Activated T-helper 1 cell treated with anti-CD3 and anti-CD28 coated beads, Interleukin-12 subunit alpha, Interleukin-12 subunit beta, Interleukin-2, Interleukin-4 antibody, amounts not matched to agents 30 ng/mL and 10 ng/mL and 1 ng/mL, durations not matched to agents 14 hours and 24 hours and 36 hours (primary cell): ENCODE measurements at regions of chr12 and their contacts with region 1.

Region 1: DNA sequence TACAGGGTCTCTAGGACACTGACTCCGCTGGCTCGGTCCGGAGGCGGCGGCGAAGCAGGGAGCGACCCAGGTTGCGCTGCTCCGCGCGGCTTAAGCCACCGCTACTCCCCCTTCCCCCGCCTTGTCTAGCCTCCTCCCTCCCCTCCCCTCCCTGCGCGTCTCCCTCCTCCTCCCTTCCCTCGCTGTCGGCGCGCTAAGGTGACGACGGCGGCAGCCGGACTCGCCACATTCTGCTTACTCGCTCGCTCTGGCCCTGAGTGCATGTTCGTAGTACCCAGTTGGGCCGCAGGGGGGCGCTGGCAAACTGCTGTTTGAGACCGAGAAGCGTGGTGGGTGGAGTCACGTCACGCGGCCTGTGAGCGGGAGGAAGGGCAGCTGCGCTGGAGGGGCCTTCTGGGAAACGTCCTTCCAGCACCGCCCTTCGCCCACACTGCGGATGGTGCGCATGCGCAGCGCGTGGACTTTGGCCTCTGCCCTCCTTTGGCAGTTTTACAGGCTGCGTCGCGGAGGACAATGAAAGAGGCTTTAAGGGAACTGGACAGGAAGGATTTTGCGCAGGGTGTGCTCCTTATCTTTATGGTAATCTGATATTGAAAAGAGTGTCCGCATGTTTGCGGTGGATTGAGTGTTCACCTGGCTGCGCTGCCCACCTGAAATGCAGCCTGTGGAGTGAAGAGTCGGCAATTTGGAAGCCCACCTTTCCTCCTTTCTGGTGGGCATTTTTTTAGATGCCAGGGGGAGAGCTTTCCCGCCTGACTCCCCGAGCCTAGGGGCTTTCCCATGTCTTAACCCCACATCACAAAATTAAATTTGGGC is at the start of gene SCAF11:
- DNase-seq: peak; percentile 100
- H3K4me3 Mint-ChIP-seq: peak within 1 kb of the TSS; percentile 95
- H3K27ac Mint-ChIP-seq: peak within 1 kb of the TSS; percentile 98
- H3K4me1 Mint-ChIP-seq: peaks cover 47% of the 10 kb centered on the region
- H3K27me3 Mint-ChIP-seq: peaks cover 3% of the 10 kb centered on the region
- total RNA-seq, gene SCAF11: 125 and 131 TPM in 2 replicates

Region 2: GRCh38 chr12:45215419-45216229 is 775.1 kb before region 1 on chr12 and contains the start of gene ANO6:
- intact Hi-C with region 1: loop called (anchors 10 kb)
- DNase-seq: peak; percentile 78
- H3K4me3 Mint-ChIP-seq: peak within 1 kb of the TSS; percentile 92
- H3K27ac Mint-ChIP-seq: peak within 1 kb of the TSS; percentile 95
- H3K4me1 Mint-ChIP-seq: peaks cover 43% of the 10 kb centered on the region
- H3K27me3 Mint-ChIP-seq: peaks cover 1% of the 10 kb centered on the region
- total RNA-seq, gene ANO6: 21.7 and 22.1 TPM in 2 replicates

Region 3: GRCh38 chr12:45893240-45893639 is 97.4 kb before region 1 on chr12:
- intact Hi-C with region 1: loop called (anchors 5 kb)
- DNase-seq: no peak
- H3K4me3 Mint-ChIP-seq: no peak overlapping the region
- H3K27ac Mint-ChIP-seq: no peak overlapping the region
- H3K4me1 Mint-ChIP-seq: peaks cover 26% of the 10 kb centered on the region
- H3K27me3 Mint-ChIP-seq: no peaks in the 10 kb centered on the region

Region 4: DNA sequence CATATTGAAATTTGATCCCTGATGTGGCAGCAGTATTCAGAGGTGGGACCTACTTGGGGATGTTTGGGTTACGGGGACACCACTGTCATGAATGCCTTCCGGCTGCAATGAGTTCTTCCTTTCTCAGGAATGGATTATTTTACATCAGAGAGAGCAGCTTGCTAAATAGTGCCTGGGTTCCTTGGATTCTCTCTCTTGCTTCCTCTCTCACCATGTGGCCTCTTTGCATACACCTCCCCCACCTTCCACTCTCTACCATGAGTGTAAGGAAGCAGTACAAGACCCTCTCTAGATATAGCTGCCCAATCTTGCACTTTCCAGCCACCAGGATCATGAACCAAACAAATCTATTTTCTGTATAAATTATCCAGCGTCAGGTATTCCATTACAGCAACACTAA is 15.1 kb after region 1 on chr12:
- intact Hi-C with region 1: no loop called
- DNase-seq: no peak
- H3K4me3 Mint-ChIP-seq: no peak overlapping the region
- H3K27ac Mint-ChIP-seq: no peak overlapping the region
- H3K4me1 Mint-ChIP-seq: no peaks in the 10 kb centered on the region
- H3K27me3 Mint-ChIP-seq: peaks cover 10% of the 10 kb centered on the region

Region 5: DNA sequence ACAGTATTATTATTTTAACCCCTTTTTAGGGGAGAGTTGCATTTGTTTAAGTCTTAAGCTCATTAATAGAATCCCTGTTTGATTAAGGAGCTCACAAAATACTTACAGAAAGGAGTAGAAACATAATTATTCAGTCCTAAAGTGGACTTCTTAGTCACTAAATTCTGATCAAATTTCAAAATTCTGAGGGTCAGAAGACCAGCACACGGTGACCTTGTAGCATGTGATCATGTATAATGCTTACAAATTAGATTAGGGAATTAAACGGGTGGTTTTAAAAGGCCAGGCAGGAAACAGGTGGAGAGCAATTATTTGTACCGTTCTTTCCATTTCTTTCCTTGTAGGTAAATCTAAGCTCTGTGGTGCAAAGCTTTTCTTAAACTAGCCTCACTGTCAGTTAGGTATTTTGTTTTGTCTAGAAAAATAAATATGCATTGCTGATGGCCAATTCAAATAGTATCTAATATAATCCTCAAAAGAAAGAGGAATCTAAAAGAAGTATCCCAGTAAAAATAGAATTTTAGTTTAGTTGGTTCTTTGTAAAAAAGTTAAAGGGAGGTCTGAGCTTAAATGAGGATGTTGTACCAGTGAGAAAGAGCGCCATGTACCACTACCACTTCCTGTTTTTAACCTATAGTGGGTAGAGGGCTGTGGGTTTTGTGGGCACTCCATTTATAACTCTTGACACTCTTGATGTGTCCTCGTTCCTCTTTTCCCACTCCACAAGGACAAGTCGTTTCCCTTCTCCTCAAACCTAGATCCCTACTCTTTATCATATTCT is 227.1 kb after region 1 on chr12:
- intact Hi-C with region 1: loop called (anchors 1 kb)
- DNase-seq: peak; percentile 64
- H3K4me3 Mint-ChIP-seq: peak overlapping the region; percentile 68
- H3K27ac Mint-ChIP-seq: peak overlapping the region; percentile 92
- H3K4me1 Mint-ChIP-seq: peaks cover 97% of the 10 kb centered on the region
- H3K27me3 Mint-ChIP-seq: no peaks in the 10 kb centered on the region

Region 6: DNA sequence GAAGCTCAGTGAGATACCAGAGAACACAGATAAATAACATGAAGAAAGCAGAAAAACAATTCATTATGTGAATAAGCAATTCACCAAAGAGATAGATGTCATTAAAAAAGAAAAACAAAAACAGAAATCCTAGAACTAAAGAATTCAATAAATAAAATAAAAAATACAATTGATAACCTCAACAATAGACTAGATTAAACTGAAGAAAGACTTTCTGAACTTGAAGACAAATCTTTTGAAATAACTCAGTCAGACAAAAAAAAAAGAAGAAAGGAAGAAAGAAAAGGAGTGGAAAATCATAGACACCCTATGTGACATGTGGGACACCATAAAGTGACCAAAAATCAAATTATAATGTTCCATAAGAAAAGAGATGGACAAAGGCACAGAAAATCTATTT is 292.2 kb after region 1 on chr12:
- intact Hi-C with region 1: no loop called
- DNase-seq: no peak
- H3K4me3 Mint-ChIP-seq: no peak overlapping the region
- H3K27ac Mint-ChIP-seq: no peak overlapping the region
- H3K4me1 Mint-ChIP-seq: no peaks in the 10 kb centered on the region
- H3K27me3 Mint-ChIP-seq: peaks cover 5% of the 10 kb centered on the region

Region 7: GRCh38 chr12:46450279-46450748 is 459.6 kb after region 1 on chr12:
- intact Hi-C with region 1: loop called (anchors 10 kb)
- DNase-seq: no peak
- H3K4me3 Mint-ChIP-seq: no peak overlapping the region
- H3K27ac Mint-ChIP-seq: no peak overlapping the region
- H3K4me1 Mint-ChIP-seq: peaks cover 53% of the 10 kb centered on the region
- H3K27me3 Mint-ChIP-seq: no peaks in the 10 kb centered on the region

Region 8: DNA sequence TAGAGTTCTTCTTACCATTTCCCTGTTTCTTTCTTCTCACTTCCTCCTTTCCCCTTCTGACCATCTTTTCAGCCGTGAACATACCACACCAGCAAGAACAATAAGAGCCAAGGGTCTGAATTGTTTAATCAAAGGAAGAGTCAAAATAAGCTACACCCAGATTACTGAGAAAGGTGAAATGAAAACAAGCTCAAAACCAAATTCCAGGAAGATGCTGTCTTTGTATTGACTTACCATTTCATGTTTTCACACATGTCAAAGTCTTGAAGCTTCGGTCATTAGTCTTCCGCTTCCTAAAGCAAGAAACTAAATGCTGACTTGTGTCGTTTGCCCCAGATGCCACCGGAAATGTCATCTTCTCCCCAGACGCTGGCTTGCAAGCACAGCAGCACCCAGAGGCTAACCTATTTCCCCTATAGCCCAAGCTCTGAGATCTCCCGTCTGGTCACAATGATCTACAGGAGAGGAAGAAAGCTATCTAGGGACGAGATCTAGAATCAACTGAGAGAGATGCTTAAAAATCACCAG is 1225.5 kb after region 1 on chr12:
- intact Hi-C with region 1: loop called (anchors 5 kb)
- DNase-seq: peak; percentile 72
- H3K4me3 Mint-ChIP-seq: peak overlapping the region; percentile 93
- H3K27ac Mint-ChIP-seq: peak overlapping the region; percentile 96
- H3K4me1 Mint-ChIP-seq: peaks cover 63% of the 10 kb centered on the region
- H3K27me3 Mint-ChIP-seq: no peaks in the 10 kb centered on the region

Region 9: GRCh38 chr12:47882781-47883546 is 1892.3 kb after region 1 on chr12:
- intact Hi-C with region 1: loop called (anchors 2 kb)
- DNase-seq: peak; percentile 44
- H3K4me3 Mint-ChIP-seq: peak overlapping the region; percentile 94
- H3K27ac Mint-ChIP-seq: peak overlapping the region; percentile 100
- H3K4me1 Mint-ChIP-seq: peaks cover 91% of the 10 kb centered on the region
- H3K27me3 Mint-ChIP-seq: no peaks in the 10 kb centered on the region